ENCODE measurements at regions of chr4 and their contacts with region 1.

Region 1: DNA sequence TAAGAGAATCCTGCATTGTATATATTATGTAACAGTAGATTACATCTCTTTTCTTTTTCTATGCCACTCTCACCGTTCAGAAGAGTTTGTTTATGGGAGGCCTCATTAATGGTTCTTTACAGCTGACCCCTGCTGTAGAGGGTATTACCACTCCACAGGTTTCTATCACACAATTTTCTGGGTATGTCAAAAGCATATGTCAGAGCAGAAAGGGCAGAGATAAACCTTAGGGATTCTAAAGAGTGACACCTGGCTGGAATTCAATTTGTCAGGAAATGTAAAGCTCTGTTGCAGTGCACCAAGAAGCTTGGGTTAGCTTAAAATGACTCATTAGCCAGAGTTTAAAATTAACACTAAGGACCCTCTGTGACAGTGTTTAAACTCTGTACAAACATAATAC is 658.7 kb downstream of the PCDH18 start:
- DNase-seq: no peak
- ATAC-seq: no peak
- H3K4me3 ChIP-seq: no peak overlapping the region
- H3K27ac ChIP-seq: no peak overlapping the region
- H3K4me1 ChIP-seq: no peaks in the 10 kb centered on the region
- H3K27me3 ChIP-seq: no peaks in the 10 kb centered on the region
- CTCF ChIP-seq: no peak
- POLR2A ChIP-seq: no peak
- RAD21 ChIP-seq: no peak

Region 2: GRCh38 chr4:136103616-136104015 is 769.9 kb before region 1 on chr4:
- CTCF ChIA-PET with region 1: no interaction called
- POLR2A ChIA-PET with region 1: no interaction called
- dilution Hi-C with region 1: no loop called
- in situ Hi-C with region 1: no loop called
- intact Hi-C with region 1: no loop called
- DNase-seq: no peak
- ATAC-seq: no peak
- H3K4me3 ChIP-seq: no peak overlapping the region
- H3K27ac ChIP-seq: no peak overlapping the region
- H3K4me1 ChIP-seq: no peaks in the 10 kb centered on the region
- H3K27me3 ChIP-seq: no peaks in the 10 kb centered on the region
- CTCF ChIP-seq: no peak
- POLR2A ChIP-seq: no peak
- RAD21 ChIP-seq: no peak

Region 3: GRCh38 chr4:136909626-136910025 is 36.1 kb after region 1 on chr4:
- CTCF ChIA-PET with region 1: no interaction called
- POLR2A ChIA-PET with region 1: interaction called, 10 read pairs
- dilution Hi-C with region 1: no loop called
- in situ Hi-C with region 1: no loop called
- intact Hi-C with region 1: no loop called
- DNase-seq: no peak
- ATAC-seq: no peak
- H3K4me3 ChIP-seq: no peak overlapping the region
- H3K27ac ChIP-seq: no peak overlapping the region
- H3K4me1 ChIP-seq: no peaks in the 10 kb centered on the region
- H3K27me3 ChIP-seq: no peaks in the 10 kb centered on the region
- CTCF ChIP-seq: no peak
- POLR2A ChIP-seq: no peak
- RAD21 ChIP-seq: no peak

Region 4: DNA sequence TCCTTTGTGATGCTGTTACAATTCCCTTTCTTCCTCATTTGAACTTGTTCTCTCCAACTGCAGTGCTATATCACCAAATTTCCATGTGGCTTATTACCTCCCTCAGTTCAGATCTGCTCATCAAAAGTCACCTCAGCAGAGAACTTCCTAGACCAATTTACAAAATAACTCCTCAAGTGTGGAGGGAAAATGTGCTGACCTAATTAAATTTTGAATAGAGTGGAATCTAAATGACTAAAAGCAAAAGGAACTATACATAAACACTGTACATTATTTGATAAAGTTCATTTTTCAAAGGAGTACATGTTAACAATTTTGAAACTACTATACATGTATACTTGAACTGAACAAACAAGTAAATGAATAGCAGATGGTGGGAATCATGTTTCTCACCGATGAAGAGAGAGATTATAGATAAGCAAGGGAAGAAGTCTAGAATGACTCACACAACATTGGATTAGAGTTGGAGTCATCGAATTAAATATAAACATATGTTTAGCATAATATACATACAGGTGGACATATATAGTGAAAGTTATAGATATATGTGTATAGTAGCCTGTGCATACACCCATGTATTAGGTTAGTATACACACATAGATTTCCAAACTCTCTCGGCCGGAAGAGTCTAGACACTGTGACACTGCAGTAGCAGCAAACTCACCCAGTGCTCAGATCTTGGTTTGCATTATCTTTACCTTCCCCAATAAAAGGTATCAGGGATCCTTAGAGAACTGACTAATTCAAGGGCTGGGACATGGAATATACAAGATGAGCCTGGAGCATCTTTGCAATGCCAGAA is 340.0 kb after region 1 on chr4:
- CTCF ChIA-PET with region 1: no interaction called
- POLR2A ChIA-PET with region 1: no interaction called
- dilution Hi-C with region 1: no loop called
- in situ Hi-C with region 1: no loop called
- intact Hi-C with region 1: loop called (anchors 10 kb)
- DNase-seq: peak; percentile 84
- ATAC-seq: peak; percentile 74
- H3K4me3 ChIP-seq: no peak overlapping the region
- H3K27ac ChIP-seq: no peak overlapping the region
- H3K4me1 ChIP-seq: no peaks in the 10 kb centered on the region
- H3K27me3 ChIP-seq: no peaks in the 10 kb centered on the region
- CTCF ChIP-seq: no peak
- POLR2A ChIP-seq: no peak
- RAD21 ChIP-seq: no peak

Measured in IMR-90 (cell line).